ENCODE measurements at regions of chrX and their contacts with region 1.

Region 1: DNA sequence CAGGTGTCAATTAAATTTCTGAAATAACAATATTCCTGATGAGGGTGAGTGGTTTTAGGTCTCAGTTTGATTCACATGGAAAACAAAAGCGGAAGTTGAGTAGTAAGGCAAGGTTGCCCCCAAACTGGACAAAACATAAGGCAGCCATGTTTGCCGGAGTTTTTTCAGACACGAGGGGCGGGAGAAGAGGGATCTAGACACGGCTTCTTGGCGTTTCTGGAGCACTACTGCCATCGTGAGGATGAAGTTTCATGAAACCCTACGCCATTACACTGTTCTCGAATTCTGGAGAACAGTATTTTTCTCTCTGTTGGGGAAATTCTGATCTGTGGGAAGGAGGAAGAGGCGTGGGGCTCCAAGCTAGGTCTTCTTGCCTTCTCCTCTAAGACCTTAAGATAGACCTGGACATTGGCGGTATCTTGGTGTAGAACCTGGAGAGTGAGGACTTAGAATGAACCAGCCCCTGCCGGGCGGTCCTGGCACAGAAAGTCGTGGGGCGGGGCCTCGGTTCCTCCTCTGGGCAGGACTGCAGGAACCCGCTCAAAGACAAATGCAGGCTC is 160.3 kb downstream of the OR13H1 start:
- DNase-seq: peak; percentile 87
- ATAC-seq: peak; percentile 85
- H3K4me3 ChIP-seq: peak overlapping the region; percentile 61
- H3K27ac ChIP-seq: peak overlapping the region; percentile 74
- H3K4me1 ChIP-seq: no peaks in the 10 kb centered on the region
- H3K27me3 ChIP-seq: no peaks in the 10 kb centered on the region
- CTCF ChIP-seq: peak; percentile 38 to 67 (median 53); a peak in 5 of 6 replicates
- EP300 ChIP-seq: no peak; a peak in 1 of 4 replicates
- POLR2A ChIP-seq: no peak
- RAD21 ChIP-seq: peak; percentile 69

Region 2: DNA sequence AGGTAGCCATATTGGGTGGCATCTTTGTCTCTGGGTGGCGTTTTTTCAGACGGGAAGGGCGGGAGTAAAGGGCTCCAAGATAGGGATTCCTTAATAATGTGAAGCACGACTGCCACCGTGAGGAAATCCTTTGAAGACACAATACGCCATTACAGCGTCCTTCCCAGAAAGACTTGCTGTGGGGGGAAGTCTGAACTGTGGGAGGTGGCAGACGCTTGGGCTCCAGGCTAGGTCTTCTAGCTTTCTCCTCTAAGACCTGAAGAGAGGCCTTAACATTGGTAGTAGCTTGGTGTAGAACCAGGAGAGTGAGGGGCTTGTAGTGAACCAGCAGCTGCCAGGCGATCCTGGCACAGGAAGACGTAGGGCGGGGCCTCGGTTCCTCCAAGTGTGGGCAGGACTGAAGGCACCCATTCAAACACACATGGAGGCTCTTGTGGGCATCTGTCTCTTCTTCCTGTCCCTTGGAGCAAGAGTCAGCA is 36.9 kb after region 1 on chrX:
- CTCF ChIA-PET with region 1: interaction called, 6 read pairs
- POLR2A ChIA-PET with region 1: no interaction called
- RAD21 ChIA-PET with region 1: interaction called, 16 read pairs
- SMC1A ChIA-PET with region 1: interaction called, 9 read pairs
- in situ Hi-C with region 1: no loop called
- intact Hi-C with region 1: loop called (anchors 1 kb)
- DNase-seq: peak; percentile 87
- ATAC-seq: peak; percentile 83
- H3K4me3 ChIP-seq: peak overlapping the region; percentile 63
- H3K27ac ChIP-seq: peak overlapping the region; percentile 95
- H3K4me1 ChIP-seq: no peaks in the 10 kb centered on the region
- H3K27me3 ChIP-seq: no peaks in the 10 kb centered on the region
- CTCF ChIP-seq: peak; percentile 22 to 54 (median 43); a peak in 5 of 6 replicates
- EP300 ChIP-seq: no peak
- POLR2A ChIP-seq: 0 out of 2 replicates have a peak, but pooled peaks have one; percentile 28
- RAD21 ChIP-seq: peak; percentile 64

Region 3: DNA sequence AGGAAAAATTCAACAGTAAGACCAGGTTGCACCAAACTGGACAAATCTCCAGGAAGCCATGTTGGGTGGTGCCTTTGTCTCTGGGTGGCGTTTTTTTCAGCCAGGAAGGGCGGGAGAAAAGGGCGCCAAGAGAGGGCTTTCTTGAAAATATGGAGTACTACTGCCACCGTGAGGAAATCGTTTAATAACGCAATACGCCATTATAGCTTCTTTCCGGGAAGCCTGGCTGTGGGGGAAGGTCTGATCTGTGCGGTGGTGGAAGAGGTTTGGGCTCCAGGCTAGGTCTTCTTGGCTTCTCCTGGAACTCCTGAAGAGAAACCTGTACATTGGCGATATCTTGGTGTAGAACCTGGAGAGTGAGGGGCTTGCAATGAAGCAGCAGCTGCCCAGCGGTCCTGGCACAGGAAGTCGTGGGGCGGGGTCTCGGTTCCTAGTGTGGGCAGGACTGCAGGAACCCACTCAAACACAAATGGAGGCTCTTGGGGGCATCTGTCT is 42.3 kb after region 1 on chrX:
- CTCF ChIA-PET with region 1: interaction called, 6 read pairs
- POLR2A ChIA-PET with region 1: no interaction called
- RAD21 ChIA-PET with region 1: interaction called, 16 read pairs
- SMC1A ChIA-PET with region 1: interaction called, 9 read pairs
- in situ Hi-C with region 1: no loop called
- intact Hi-C with region 1: loop called (anchors 1 kb)
- DNase-seq: peak; percentile 87
- ATAC-seq: peak; percentile 68
- H3K4me3 ChIP-seq: peak overlapping the region; percentile 63
- H3K27ac ChIP-seq: peak overlapping the region; percentile 93
- H3K4me1 ChIP-seq: no peaks in the 10 kb centered on the region
- H3K27me3 ChIP-seq: no peaks in the 10 kb centered on the region
- CTCF ChIP-seq: peak; percentile 28 to 62 (median 41); a peak in 4 of 6 replicates
- EP300 ChIP-seq: no peak; a peak in 1 of 4 replicates
- POLR2A ChIP-seq: no peak
- RAD21 ChIP-seq: peak; percentile 58

Region 4: GRCh38 chrX:131778269-131779218 is 74.3 kb after region 1 on chrX:
- CTCF ChIA-PET with region 1: interaction called, 4 read pairs
- POLR2A ChIA-PET with region 1: no interaction called
- RAD21 ChIA-PET with region 1: no interaction called
- SMC1A ChIA-PET with region 1: no interaction called
- in situ Hi-C with region 1: no loop called
- intact Hi-C with region 1: loop called (anchors 2 kb)
- DNase-seq: peak; percentile 82
- ATAC-seq: peak; percentile 89
- H3K4me3 ChIP-seq: peak overlapping the region; percentile 55; the same call in 1 of the 2 replicates
- H3K27ac ChIP-seq: peak overlapping the region; percentile 90
- H3K4me1 ChIP-seq: peaks cover 5% of the 10 kb centered on the region; the same call in 1 of the 2 replicates
- H3K27me3 ChIP-seq: no peaks in the 10 kb centered on the region; a peak in 1 of 4 replicates
- CTCF ChIP-seq: peak in 2 of 3 experiments; percentile 42 to 61; a peak in 3 of 6 replicates
- EP300 ChIP-seq: no peak
- POLR2A ChIP-seq: no peak
- RAD21 ChIP-seq: peak; percentile 71

Region 5: DNA sequence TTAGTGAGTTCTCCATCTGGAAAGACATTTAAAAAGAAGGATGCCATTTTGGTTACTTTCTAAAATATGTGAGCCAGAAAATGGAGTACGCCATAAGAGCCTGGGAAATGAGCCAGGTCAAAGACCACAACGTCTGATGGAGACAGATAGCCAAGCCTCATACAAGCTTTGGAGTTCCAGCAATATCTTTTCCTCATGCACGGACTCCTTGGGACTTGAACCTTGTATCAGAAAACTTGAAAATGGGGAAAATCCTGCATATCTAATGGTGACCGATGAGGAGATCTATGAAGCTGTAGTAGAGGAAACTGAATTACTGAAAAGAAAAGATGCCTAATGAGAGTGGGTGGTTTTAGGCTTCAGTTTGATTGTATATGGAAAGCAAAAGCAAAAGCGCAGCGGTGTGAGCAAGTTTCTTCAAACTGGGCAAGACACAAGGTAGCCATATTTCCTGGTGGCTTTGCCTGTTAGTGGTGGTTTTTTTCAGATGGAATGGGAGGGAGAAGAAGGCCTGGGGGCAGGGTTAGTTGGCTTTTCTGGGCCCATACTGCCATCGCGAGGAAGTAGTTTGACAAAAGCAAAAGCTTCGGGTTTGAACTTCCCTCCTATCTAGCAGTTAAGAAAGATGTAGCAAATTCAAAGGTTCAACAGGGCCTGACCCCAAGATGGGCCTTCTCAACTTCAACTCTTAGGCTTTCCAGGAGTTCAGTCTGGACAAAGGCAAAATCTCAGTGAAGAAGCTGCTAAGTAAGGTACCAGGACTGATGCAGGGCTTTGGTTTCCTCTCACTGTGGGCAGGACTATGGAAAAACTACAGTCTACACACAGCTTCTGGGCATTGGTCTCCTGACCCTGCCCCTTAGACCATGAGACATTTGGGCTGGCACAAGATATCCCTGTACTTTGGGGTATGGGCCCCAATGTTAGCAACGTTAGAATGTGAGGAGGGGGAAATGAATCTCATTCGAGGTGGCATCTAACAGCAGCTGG is 108.9 kb after region 1 on chrX:
- CTCF ChIA-PET with region 1: interaction called, 3 read pairs
- POLR2A ChIA-PET with region 1: no interaction called
- RAD21 ChIA-PET with region 1: no interaction called
- SMC1A ChIA-PET with region 1: no interaction called
- in situ Hi-C with region 1: no loop called
- intact Hi-C with region 1: loop called (anchors 1 kb)
- DNase-seq: peak; percentile 92
- ATAC-seq: peak; percentile 95
- H3K4me3 ChIP-seq: peak overlapping the region; percentile 58
- H3K27ac ChIP-seq: peak overlapping the region; percentile 84
- H3K4me1 ChIP-seq: peaks cover 13% of the 10 kb centered on the region; the same call in 1 of the 2 replicates
- H3K27me3 ChIP-seq: no peaks in the 10 kb centered on the region
- CTCF ChIP-seq: peak; percentile 45 to 86 (median 64); a peak in 5 of 6 replicates
- EP300 ChIP-seq: peak in 1 of 2 experiments; percentile 53; a peak in 2 of 4 replicates
- POLR2A ChIP-seq: no peak
- RAD21 ChIP-seq: peak; percentile 89

Measured in GM12878 (cell line).